ENCODE measurements at regions of chr20 and their contacts with region 1.

Region 1: DNA sequence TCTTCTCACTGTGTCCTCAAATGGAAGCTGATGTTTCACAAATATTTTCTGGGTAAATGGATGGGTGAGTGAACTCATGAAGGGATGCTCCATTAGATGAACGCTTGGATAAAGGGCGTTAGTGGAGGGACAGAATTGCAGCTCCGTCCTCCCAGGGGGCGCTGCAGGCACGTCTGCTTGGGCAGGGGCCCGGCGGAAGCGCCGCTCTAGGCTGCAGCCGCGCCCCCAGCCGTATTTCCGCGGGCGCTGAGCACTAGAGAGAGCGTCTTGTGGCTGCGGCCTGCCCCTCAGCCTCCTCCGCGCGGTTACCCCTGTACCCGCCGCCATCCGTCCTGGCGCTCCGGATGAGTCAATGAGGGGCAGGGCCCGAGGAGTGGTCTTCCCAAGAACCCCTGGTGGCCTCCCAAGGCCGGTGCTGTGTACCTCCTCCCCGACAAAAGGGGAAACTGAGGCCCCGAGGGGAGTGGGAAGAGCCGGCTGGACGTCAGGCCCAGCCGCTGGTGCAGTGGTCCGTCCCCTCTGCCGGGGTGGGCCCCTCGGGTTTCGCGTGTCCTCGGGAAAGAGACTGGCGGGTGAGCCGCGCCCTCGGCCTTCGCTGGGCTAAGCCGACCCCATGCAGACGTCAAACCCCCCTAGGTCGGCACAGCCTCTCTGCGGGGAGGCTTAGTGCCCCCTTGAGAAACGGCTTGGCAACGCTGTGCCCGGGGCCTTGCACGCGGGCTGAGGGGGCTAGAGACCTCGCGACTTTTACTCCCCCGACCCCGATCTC is 11.5 kb upstream of the SNHG17 start:
- DNase-seq: peak; percentile 93

Region 2: GRCh38 chr20:38434743-38435554 is 11.7 kb before region 1 on chr20 and contains the start of gene SNHG17:
- intact Hi-C with region 1: loop called (anchors 1 kb)
- DNase-seq: peak; percentile 95
- total RNA-seq, gene SNHG17: 10.6 TPM

Region 3: DNA sequence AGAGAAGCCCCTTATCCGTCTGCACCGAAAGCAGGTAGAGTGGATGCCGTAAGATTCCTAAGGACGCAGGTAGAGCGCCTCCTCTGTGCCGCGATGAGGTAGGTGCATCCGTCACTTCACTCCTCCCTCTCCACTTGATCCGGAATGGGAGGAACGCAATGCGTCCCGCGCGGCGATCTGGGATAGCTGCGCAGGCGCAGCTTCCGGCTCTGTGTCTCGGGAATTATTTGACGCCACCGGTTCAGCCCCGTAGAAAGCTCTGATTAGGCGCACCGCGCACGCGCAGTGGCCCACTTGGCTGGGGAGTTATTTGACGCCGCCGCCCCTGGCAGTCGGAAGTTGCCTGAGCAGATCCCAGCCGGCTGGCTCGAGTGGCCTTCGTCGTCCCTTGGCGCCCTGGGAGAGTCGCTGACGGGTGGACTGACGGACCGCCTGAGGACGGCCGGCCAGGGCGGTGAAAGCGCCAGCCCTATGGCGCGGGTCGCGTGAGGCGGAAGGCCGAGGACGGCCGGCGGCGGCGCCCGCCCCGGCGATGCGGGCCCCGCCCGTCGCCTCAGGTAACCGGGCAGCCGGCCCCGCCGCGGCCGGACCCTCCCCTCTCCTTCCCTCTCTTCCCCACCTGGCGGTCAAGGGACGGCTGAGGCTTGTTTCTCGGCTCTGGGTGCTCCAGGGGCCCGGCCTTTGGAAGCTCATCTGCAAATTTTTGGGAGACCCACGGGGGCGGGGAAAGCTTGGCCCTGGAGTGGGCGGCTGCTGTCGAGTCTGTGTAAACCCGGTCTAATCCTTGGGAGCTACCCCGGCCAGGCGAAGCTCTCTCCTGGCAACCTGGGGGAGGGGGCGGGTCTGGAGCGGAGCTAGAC is 26.1 kb after region 1 on chr20 and contains the start of gene RALGAPB:
- intact Hi-C with region 1: loop called (anchors 2 kb)
- DNase-seq: peak; percentile 100
- total RNA-seq, gene RALGAPB: 27.6 TPM

Measured in cardiac septum (tissue), 1 donor.